GM18951 (cell line): ENCODE measurements at regions of chr6 and their contacts with region 1.

Region 1: DNA sequence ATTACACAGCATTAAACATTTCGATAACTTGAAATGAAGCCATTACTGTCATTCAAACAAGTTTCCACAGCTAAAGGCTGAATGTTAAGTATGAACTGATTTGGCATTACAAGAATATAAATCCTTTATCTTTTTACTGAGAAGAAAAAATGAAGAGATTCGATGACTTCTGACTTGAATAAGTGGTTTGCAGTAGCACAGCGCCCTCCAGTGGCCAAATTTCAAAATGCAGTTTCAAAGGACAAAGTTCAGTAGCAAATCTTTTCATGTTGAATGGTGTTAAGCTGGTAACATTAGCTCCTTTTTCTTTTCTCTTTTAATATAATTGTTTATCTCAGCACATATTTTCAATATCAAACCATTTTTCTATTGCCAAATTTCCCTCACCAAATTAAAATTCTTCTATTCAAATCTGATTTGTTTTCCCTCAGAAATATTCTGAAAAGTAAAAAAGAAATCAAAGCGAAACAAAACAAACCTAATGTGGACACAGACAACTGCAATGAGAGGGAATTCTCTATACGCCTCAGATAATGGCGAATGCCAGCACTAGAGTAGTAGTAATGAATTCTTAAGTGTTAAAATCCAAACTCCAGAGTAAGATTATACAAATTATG is 145.7 kb downstream of the BTBD9 start:
- POLR2A ChIP-seq: no peak

Region 2: DNA sequence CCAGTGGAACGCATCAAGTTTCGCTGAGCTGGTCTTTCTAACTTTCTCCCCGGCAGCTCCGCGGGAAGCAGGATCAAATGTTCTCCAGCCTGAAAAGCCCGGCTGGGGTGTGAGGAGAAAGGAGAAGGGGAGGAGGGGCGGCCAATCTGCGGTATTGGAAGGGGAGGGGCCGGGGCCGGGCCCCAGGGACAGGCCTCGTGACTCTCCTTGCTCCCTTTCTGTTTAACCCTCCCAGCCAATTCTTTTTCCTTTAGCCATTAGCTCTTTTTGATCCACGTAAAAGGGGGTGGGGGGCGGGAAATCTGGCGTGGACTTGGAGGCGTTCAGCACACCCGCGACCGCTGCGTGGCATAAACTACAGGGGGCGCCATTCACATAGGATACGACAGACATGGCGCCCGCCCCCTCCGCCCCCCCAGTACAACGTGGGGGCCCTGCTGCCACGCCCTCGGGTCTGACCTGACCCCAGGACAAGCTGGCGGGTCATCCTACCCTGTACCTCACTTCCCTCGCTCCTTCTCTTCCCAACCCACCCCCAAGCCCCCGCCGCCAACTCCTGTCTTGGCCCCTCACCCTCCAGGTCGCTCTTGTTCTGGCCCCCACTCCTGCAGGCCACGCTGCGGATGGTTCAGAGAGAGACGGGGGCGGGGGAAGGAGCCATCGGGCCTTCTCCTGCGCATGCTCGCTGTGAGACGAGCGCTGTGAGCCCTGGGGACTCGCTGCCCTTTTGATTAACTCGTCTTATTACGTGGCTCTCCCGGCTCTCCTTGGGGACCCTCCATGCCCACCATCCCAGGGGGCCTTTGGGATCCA is 788.6 kb before region 1 on chr6:
- in situ Hi-C with region 1: loop called (anchors 10 kb)
- POLR2A ChIP-seq: no peak